Activated T-helper 1 cell treated with anti-CD3 and anti-CD28 coated beads, Interleukin-12 subunit alpha, Interleukin-12 subunit beta, Interleukin-2, Interleukin-4 antibody, amounts not matched to agents 30 ng/mL and 10 ng/mL and 1 ng/mL, durations not matched to agents 14 hours and 24 hours and 36 hours (primary cell): ENCODE measurements at regions of chr1 and their contacts with region 1.

Region 1: GRCh38 chr1:8314346-8315280 is 3.3 kb upstream of the SLC45A1 start:
- DNase-seq: no peak
- H3K4me3 Mint-ChIP-seq: no peak overlapping the region
- H3K27ac Mint-ChIP-seq: no peak overlapping the region
- H3K4me1 Mint-ChIP-seq: peaks cover 18% of the 10 kb centered on the region
- H3K27me3 Mint-ChIP-seq: peaks cover 44% of the 10 kb centered on the region

Region 2: GRCh38 chr1:8015036-8015808 is 299.4 kb before region 1 on chr1:
- intact Hi-C with region 1: loop called (anchors 1 kb)
- DNase-seq: peak; percentile 22
- H3K4me3 Mint-ChIP-seq: no peak overlapping the region
- H3K27ac Mint-ChIP-seq: no peak overlapping the region
- H3K4me1 Mint-ChIP-seq: peaks cover 5% of the 10 kb centered on the region
- H3K27me3 Mint-ChIP-seq: peaks cover 18% of the 10 kb centered on the region

Region 3: GRCh38 chr1:8274352-8274751 is 40.3 kb before region 1 on chr1:
- intact Hi-C with region 1: no loop called
- DNase-seq: no peak
- H3K4me3 Mint-ChIP-seq: no peak overlapping the region
- H3K27ac Mint-ChIP-seq: no peak overlapping the region
- H3K4me1 Mint-ChIP-seq: no peaks in the 10 kb centered on the region
- H3K27me3 Mint-ChIP-seq: peaks cover 4% of the 10 kb centered on the region

Region 4: GRCh38 chr1:8348777-8349491 is 34.3 kb after region 1 on chr1:
- intact Hi-C with region 1: no loop called
- DNase-seq: peak; percentile 41
- H3K4me3 Mint-ChIP-seq: no peak overlapping the region
- H3K27ac Mint-ChIP-seq: no peak overlapping the region
- H3K4me1 Mint-ChIP-seq: peaks cover 4% of the 10 kb centered on the region
- H3K27me3 Mint-ChIP-seq: no peaks in the 10 kb centered on the region

Region 5: GRCh38 chr1:8382051-8382505 is 67.5 kb after region 1 on chr1:
- intact Hi-C with region 1: no loop called
- DNase-seq: no peak
- H3K4me3 Mint-ChIP-seq: no peak overlapping the region
- H3K27ac Mint-ChIP-seq: no peak overlapping the region
- H3K4me1 Mint-ChIP-seq: peaks cover 47% of the 10 kb centered on the region
- H3K27me3 Mint-ChIP-seq: no peaks in the 10 kb centered on the region